Left ventricle myocardium inferior (tissue), 1 donor: ENCODE measurements at regions of chr2 and their contacts with region 1.

Region 1: DNA sequence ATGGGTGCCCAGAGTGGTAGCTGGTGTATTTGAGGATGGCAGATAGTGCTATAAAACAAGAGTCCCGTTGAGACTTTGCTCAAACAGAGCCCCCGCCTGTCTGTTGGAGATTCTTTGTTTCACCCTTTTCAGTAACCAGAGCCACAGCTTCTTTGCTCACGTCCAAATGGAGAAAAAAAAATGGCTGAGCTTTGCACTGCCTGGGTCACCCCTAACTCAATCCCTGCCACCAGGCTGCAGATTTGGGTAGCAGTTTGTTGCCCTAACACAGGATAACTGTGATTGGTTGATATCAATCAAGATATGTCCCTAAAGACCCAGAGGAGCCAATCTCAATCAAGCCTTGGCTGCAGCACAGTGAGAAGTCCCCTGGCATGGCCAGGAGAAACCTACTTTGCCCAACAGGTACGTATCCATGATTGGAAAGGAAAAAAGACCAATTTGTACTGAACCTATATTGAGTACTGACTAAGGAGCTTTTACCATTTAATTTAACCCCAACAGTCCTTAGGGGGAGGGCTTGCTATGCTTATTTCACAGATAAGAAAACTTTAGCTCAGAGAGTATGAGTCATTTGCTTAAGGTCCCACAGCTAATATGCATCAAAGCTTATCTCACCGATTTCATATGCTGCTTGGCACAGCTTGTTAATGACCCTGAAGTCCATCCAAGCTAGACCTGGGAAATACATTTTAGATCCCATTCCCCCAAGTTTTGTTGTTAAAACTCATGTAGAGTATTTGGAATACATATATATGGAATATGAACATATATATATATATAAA is 72.0 kb upstream of the SH3BP4 start:
- DNase-seq: no peak
- H3K4me3 ChIP-seq: no peak overlapping the region
- H3K27ac ChIP-seq: no peak overlapping the region
- H3K4me1 ChIP-seq: peaks cover 30% of the 10 kb centered on the region
- H3K27me3 ChIP-seq: no peaks in the 10 kb centered on the region
- CTCF ChIP-seq: no peak

Region 2: DNA sequence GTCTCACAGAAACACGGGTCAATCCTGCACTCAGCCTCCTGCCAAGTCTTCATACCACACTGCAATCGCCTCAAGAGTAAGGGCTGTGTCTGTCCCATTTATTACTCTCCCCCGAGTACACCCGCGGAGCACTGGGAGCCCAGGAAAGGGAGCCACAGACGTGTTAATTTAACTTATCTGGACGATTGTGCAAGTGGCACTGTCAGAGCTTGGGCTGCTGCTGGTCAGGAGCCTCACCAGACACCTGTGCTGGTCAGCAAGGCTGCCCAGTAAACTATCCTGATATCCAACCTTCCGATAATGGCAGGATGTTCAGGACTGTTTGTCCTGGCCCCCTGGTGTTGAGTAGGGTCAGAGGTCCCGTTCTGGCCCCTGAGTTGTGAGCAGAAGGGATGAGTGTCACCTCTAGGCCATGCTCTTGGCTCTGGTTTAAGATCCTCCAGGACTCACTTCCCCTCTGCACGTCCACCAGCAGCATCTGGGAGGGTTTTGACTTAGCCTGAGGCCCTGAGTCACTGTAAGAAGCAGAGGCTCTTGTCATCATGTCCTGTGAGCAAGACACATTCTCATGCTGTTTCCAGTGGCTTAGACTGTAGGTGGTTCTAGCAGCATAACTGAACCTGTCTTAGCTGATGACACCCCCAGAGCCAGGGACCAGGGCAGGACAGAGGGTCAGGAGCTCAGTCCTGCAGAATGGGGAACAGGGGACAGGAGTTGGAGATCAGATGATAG is 300.5 kb before region 1 on chr2:
- intact Hi-C with region 1: no loop called
- DNase-seq: no peak
- H3K4me3 ChIP-seq: no peak overlapping the region
- H3K27ac ChIP-seq: no peak overlapping the region
- H3K4me1 ChIP-seq: no peaks in the 10 kb centered on the region
- H3K27me3 ChIP-seq: peaks cover 36% of the 10 kb centered on the region
- CTCF ChIP-seq: no peak

Region 3: DNA sequence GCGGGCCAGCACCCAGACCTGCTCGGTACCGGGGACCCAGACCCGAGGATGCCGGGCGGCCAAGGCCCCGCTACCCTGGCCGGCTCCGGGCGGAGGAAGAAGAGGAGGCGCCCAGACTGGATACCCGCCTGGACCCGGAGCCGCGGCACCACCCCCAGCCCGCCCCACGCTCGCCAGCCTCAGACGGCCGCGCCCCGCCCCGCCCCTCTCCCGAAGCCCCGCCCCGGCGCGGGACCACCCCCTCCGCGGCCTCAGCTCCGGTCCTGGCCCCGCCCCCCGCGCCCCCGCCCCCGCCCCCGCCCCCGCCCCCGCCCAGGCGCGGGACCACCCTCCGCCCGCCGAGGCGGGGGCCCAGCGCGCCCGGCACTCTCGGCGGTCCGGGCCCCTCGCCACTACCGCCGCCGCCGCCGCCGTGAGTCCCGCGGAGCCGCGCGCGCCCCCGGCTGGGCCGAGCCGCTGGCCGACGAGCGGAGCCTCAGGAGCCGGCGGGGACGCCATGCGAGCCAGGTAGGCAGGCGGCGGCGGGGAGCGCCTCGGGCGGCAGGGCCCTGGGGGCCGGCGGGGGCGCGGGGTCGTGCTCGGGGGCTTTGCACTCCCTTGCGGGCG is 71.9 kb after region 1 on chr2 and contains the start of gene SH3BP4:
- intact Hi-C with region 1: no loop called
- DNase-seq: peak; percentile 88
- H3K4me3 ChIP-seq: peak within 1 kb of the TSS; percentile 95
- H3K27ac ChIP-seq: peak within 1 kb of the TSS; percentile 90
- H3K4me1 ChIP-seq: peaks cover 54% of the 10 kb centered on the region
- H3K27me3 ChIP-seq: no peaks in the 10 kb centered on the region
- CTCF ChIP-seq: no peak
- total RNA-seq, gene SH3BP4: 9.6 TPM

Region 4: DNA sequence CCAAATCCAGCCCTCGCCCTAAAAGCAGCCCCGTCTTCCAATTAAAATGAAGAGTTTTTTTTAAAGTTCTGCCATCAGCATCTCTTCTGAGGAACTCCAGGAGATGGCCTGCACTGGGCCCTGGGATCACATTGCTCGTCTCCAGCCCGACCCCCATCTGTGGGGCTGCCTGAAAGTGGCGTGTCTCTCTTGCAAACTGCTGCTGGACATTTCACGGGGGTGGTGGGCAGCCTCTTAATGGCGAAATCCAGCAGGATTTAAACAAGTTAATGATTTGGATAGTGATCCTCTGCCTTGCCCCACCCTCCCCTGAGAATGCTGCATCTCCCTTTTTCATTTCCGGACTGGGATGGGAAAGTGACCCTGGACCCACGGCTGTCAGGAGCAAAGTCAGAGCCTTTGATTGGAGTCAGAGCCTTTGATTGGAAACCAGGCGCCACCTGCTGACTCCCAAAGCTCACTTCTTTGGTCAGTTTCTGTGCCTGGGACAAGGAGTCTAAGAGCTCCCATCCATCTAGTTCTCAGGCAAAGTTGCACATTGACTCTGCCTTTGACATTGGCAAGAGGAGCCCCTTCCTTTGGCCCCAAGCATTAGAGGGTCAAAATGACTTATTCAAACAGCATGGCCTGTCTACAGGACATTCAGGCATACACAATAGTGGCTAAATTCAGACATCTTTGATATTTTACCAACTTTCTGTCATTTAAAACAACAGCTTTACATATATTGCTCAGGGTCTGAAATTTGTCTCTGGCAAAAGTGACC is 227.2 kb after region 1 on chr2:
- intact Hi-C with region 1: loop called (anchors 10 kb)
- DNase-seq: peak; percentile 63
- H3K4me3 ChIP-seq: no peak overlapping the region
- H3K27ac ChIP-seq: no peak overlapping the region
- H3K4me1 ChIP-seq: peaks cover 12% of the 10 kb centered on the region
- H3K27me3 ChIP-seq: no peaks in the 10 kb centered on the region
- CTCF ChIP-seq: peak; percentile 79